ENCODE measurements at regions of chr6 and their contacts with region 1.

Region 1: DNA sequence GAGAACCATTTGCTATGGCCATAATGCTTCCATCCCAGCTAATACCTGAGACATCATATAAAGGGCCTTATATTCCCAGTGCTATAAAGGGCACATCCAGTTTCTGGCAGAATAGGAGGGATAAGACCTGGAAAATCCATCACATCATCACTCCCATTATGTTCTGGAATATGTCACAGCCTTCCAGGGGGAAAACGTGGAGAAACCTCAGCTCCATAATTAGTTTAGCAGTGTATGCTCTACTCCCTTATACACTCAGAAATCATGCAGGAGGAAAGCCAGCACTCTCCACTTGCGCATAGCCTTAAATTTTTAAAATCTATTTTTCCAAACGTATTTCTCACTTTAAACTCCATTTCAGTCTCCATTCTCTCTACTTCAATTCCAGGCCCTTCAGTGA is 140.9 kb downstream of the ADGB start:
- DNase-seq: no peak
- ATAC-seq: no peak
- H3K4me3 ChIP-seq: no peak overlapping the region
- H3K27ac ChIP-seq: no peak overlapping the region
- H3K4me1 ChIP-seq: no peaks in the 10 kb centered on the region
- H3K27me3 ChIP-seq: no peaks in the 10 kb centered on the region
- CTCF ChIP-seq: no peak

Region 2: DNA sequence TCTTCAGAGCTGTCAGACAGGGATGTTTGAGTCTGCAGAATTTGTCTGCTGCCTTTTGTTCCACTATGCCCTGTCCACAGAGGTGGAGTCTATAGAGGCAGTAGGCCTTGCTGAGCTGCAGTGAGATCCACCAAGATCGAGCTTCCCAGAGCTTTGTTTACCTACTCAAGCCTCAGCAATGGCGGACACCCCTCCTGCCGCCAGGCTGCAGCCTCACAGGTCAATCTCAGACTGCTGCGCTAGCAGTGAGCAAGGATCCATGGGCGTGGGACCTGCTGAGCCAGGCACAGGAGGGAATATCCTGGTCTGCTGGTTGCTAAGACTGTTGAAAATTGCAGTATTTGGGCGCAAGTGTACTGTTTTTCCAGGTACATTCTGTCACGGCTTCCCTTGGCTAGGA is 224.5 kb before region 1 on chr6:
- intact Hi-C with region 1: loop called in 1 of 3 experiments (anchors 5 kb)
- DNase-seq: no peak
- ATAC-seq: no peak
- H3K4me3 ChIP-seq: no peak overlapping the region
- H3K27ac ChIP-seq: no peak overlapping the region
- H3K4me1 ChIP-seq: no peaks in the 10 kb centered on the region
- H3K27me3 ChIP-seq: no peaks in the 10 kb centered on the region
- CTCF ChIP-seq: no peak

Measured in pancreas (tissue), 10 donors.